Naive thymus-derived CD4-positive, alpha-beta T cell (primary cell): ENCODE measurements at regions of chr10 and their contacts with region 1.

Region 1: DNA sequence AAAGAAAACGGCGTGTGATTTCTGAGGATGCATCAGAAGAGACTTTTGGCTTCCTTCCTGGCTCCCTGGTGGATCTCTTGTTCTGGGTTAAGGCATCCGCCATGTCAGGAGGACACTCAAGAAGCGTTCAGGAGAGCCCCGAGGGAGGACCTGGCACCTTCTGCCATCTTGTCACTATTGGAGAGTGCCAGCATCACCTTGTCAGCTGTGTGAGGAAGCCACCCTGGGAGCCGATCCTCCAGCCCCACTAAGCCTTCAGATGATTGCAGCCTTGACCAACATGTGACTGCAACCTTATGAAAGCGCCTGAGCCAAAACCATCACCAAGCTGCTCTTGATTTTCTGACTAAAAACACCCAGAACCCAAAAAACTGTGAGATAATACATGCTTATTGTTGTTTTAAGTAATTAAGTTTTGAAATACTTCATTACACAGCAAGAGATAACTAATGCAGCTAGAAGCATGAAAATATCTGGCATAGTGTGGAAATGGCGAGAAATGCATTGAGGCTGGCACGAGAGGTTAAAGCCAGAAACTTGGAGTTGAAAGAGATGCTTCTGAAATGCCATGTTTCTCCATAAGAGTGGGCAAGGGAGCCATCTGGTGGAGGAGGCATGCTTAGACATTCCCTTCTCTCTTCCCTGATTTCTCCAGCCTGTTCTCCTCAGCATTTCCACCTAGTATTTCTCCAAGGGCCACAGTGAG is 5.4 kb upstream of the ZFYVE27 start:
- DNase-seq: peak in 8 of 9 donors; percentile 32 to 58 (median 50)
- ATAC-seq: peak; percentile 83
- H3K4me3 ChIP-seq: no peak overlapping the region
- H3K4me3 Mint-ChIP-seq: no peak overlapping the region
- H3K27ac ChIP-seq: no peak overlapping the region
- H3K27ac Mint-ChIP-seq: no peak overlapping the region
- H3K4me1 ChIP-seq: peaks cover 0 to 3% of the 10 kb centered on the region in 2 donors
- H3K4me1 Mint-ChIP-seq: peaks cover 7 to 12% (median 10%) of the 10 kb centered on the region in 7 donors
- H3K27me3 ChIP-seq: no peaks in the 10 kb centered on the region
- H3K27me3 Mint-ChIP-seq: peaks cover 0 to 8% (median 3%) of the 10 kb centered on the region in 5 donors

Region 2: GRCh38 chr10:97407211-97407951 is 324.1 kb before region 1 on chr10:
- CTCF ChIA-PET with region 1: no interaction called
- POLR2A ChIA-PET with region 1: no interaction called
- intact Hi-C with region 1: loop called in 1 of 2 experiments (anchors 2 kb)
- DNase-seq: peak; percentile 35 to 78 (median 69)
- ATAC-seq: peak; percentile 96
- H3K4me3 ChIP-seq: peak overlapping the region; percentile 40
- H3K4me3 Mint-ChIP-seq: peak overlapping the region; percentile 10 to 79 (median 52)
- H3K27ac ChIP-seq: peak overlapping the region; percentile 54
- H3K27ac Mint-ChIP-seq: peak overlapping the region in 8 of 9 donors; percentile 14 to 84 (median 44)
- H3K4me1 ChIP-seq: peaks cover 4 to 7% of the 10 kb centered on the region in 2 donors
- H3K4me1 Mint-ChIP-seq: peaks cover 0 to 13% (median 9%) of the 10 kb centered on the region in 7 donors
- H3K27me3 ChIP-seq: no peaks in the 10 kb centered on the region
- H3K27me3 Mint-ChIP-seq: no peaks in the 10 kb centered on the region

Region 3: GRCh38 chr10:97572214-97572989 is 159.1 kb before region 1 on chr10 and contains the start of gene ANKRD2:
- CTCF ChIA-PET with region 1: no interaction called
- POLR2A ChIA-PET with region 1: no interaction called
- intact Hi-C with region 1: loop called (anchors 1 to 2 kb)
- DNase-seq: peak in 8 of 9 donors; percentile 2 to 47 (median 34)
- ATAC-seq: peak; percentile 82
- H3K4me3 ChIP-seq: no peak within 1 kb of the TSS
- H3K4me3 Mint-ChIP-seq: no peak within 1 kb of the TSS
- H3K27ac ChIP-seq: no peak within 1 kb of the TSS
- H3K27ac Mint-ChIP-seq: no peak within 1 kb of the TSS
- H3K4me1 ChIP-seq: no peaks in the 10 kb centered on the region
- H3K4me1 Mint-ChIP-seq: peaks cover 0 to 3% (median 0%) of the 10 kb centered on the region in 7 donors
- H3K27me3 ChIP-seq: no peaks in the 10 kb centered on the region
- H3K27me3 Mint-ChIP-seq: peaks cover 0 to 1% (median 0%) of the 10 kb centered on the region in 5 donors
- total RNA-seq, gene ANKRD2: 0.22 TPM in 1 of 5 experiments, not detected in the others

Region 4: DNA sequence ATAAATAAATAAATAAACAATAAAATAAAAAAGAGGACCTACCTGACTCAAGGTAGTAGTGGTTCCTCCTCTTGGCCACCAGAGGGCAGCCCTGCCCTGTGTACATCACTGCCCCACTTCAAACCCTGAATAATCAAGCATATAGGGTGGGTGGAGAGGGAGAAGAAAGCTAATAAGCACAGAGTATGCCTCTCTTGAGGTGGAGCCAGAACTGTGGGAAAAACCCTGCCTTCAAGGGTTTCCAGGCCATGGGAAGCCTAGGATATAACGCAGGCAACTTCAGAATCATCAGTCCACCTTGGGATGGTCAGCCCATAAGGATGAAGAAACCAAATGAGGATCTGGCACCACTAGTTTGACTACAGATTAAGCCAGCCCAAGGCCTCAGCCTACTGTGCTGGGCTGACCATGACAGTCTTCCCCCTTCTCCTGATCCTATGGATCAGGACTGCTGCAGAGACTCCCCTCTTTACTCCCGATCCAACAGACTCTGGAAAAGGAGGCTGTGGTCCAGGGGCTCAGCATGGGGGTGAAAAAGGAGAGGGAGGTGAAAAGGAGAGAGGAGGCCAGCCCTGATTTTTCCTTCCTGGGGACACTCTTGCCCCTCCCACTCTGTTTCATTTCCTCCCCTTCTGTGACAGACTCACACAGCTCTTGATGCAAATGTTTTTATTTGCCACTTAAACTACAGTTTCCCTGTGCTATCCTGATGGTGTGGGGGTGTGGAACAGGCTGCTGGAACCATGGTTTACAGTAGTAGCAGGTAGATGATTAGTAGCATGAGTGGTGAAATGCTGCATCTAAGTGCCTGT is 54.5 kb before region 1 on chr10:
- CTCF ChIA-PET with region 1: interaction called, 90 read pairs
- POLR2A ChIA-PET with region 1: interaction called, 14 read pairs
- intact Hi-C with region 1: loop called in 1 of 2 experiments (anchors 1 kb)
- DNase-seq: peak; percentile 35 to 60 (median 48)
- ATAC-seq: peak; percentile 90
- H3K4me3 ChIP-seq: no peak overlapping the region
- H3K4me3 Mint-ChIP-seq: no peak overlapping the region
- H3K27ac ChIP-seq: no peak overlapping the region
- H3K27ac Mint-ChIP-seq: peak overlapping the region in 1 of 9 donors; percentile 13
- H3K4me1 ChIP-seq: no peaks in the 10 kb centered on the region
- H3K4me1 Mint-ChIP-seq: peaks cover 0 to 16% (median 0%) of the 10 kb centered on the region in 7 donors
- H3K27me3 ChIP-seq: no peaks in the 10 kb centered on the region
- H3K27me3 Mint-ChIP-seq: no peaks in the 10 kb centered on the region

Region 5: DNA sequence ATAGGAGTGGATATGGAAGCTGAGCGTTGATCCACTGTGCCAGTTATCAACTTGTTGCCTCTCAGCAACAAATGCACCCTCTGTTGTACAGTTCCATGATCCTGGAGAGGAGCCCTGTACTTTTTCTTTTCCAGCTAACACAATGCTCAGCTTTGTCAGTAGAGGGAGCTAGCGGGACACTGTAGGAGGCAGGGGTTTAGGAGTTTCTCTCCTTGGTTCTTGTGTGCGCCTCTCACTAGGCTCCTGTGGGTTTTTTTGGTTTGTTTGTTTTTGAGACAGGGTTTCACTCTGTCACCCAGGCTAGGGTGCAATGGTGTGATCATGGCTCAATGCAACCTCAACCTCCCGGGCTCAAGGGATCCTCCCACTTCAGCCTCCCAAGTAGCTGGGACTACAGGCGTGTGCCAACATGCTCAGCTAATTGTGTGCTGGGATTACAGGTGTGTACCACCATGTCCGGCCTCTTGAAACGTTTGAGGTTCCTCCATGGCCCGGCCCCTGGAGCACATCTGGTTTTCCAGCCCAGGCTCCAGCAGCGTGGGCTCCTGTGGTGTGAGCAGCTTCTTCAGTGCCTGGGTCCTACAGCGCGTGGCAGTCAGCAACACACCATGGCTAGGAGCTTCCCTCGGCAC is 29.9 kb before region 1 on chr10:
- CTCF ChIA-PET with region 1: interaction called, 37 read pairs
- POLR2A ChIA-PET with region 1: interaction called, 4 read pairs
- intact Hi-C with region 1: loop called (anchors 1 kb)
- DNase-seq: peak in 8 of 9 donors; percentile 35 to 66 (median 56)
- ATAC-seq: peak; percentile 97
- H3K4me3 ChIP-seq: no peak overlapping the region
- H3K4me3 Mint-ChIP-seq: no peak overlapping the region
- H3K27ac ChIP-seq: no peak overlapping the region
- H3K27ac Mint-ChIP-seq: no peak overlapping the region
- H3K4me1 ChIP-seq: no peaks in the 10 kb centered on the region
- H3K4me1 Mint-ChIP-seq: peaks cover 0 to 6% (median 0%) of the 10 kb centered on the region in 7 donors
- H3K27me3 ChIP-seq: no peaks in the 10 kb centered on the region
- H3K27me3 Mint-ChIP-seq: peaks cover 0 to 19% (median 6%) of the 10 kb centered on the region in 5 donors

Region 6: GRCh38 chr10:97714048-97714371 is 17.5 kb before region 1 on chr10:
- CTCF ChIA-PET with region 1: interaction called, 58 read pairs
- POLR2A ChIA-PET with region 1: interaction called, 7 read pairs
- intact Hi-C with region 1: loop called (anchors 1 kb)
- DNase-seq: peak in 8 of 9 donors; percentile 28 to 67 (median 40)
- ATAC-seq: peak; percentile 83
- H3K4me3 ChIP-seq: peak overlapping the region; percentile 69
- H3K4me3 Mint-ChIP-seq: peak overlapping the region; percentile 95 to 100 (median 99)
- H3K27ac ChIP-seq: no peak overlapping the region
- H3K27ac Mint-ChIP-seq: peak overlapping the region in 7 of 9 donors; percentile 44 to 95 (median 80)
- H3K4me1 ChIP-seq: peaks cover 5 to 6% of the 10 kb centered on the region in 2 donors
- H3K4me1 Mint-ChIP-seq: peaks cover 5 to 21% (median 11%) of the 10 kb centered on the region in 7 donors
- H3K27me3 ChIP-seq: no peaks in the 10 kb centered on the region
- H3K27me3 Mint-ChIP-seq: peaks cover 14 to 43% (median 19%) of the 10 kb centered on the region in 5 donors